Mucosa of descending colon (tissue), 3 donors: ENCODE measurements at regions of chr17 and their contacts with region 1.

Region 1: DNA sequence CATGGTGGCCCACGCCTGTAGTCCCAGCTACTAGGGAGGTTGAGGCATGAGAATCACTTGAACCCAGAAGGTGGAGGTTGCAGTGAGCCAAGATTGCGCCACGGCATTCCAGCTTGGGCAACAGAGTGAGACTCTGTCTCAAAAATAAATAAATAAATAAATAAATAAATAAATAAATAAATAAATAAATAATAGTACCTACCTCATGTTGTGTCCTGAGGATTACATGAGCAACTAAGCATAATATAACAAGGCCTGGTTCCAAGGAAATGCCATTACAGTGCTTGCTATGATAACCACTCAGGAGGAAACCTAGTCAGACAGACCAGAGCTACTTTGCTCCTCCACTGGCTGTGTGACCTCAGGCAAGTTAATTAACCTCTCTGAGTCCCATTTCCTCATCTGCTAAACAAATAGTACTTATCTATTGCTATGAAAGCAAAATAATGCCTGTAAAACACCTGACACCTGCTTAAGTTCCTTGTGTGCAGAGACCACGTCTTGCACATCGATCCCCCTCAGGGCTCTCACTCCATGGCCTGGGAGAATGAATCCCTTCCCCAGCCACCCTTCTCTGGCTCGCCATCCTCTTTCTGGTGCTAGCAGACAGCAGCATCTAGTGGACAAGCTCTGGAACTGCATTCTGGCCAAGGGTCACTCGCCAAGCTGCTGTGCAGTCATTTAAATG is 7.5 kb downstream of the EPOP start:
- DNase-seq: peak in 2 of 3 donors; percentile 63 to 71
- ATAC-seq: peak; percentile 87
- H3K4me3 ChIP-seq: no peak overlapping the region
- H3K4me1 ChIP-seq: no peaks in the 10 kb centered on the region
- CTCF ChIP-seq: peak; percentile 99

Region 2: GRCh38 chr17:38498186-38498752 is 169.0 kb before region 1 on chr17:
- intact Hi-C with region 1: loop called in 1 of 2 experiments (anchors 10 kb)
- DNase-seq: no peak
- ATAC-seq: no peak
- H3K4me3 ChIP-seq: no peak overlapping the region
- H3K4me1 ChIP-seq: no peaks in the 10 kb centered on the region
- CTCF ChIP-seq: no peak

Region 3: DNA sequence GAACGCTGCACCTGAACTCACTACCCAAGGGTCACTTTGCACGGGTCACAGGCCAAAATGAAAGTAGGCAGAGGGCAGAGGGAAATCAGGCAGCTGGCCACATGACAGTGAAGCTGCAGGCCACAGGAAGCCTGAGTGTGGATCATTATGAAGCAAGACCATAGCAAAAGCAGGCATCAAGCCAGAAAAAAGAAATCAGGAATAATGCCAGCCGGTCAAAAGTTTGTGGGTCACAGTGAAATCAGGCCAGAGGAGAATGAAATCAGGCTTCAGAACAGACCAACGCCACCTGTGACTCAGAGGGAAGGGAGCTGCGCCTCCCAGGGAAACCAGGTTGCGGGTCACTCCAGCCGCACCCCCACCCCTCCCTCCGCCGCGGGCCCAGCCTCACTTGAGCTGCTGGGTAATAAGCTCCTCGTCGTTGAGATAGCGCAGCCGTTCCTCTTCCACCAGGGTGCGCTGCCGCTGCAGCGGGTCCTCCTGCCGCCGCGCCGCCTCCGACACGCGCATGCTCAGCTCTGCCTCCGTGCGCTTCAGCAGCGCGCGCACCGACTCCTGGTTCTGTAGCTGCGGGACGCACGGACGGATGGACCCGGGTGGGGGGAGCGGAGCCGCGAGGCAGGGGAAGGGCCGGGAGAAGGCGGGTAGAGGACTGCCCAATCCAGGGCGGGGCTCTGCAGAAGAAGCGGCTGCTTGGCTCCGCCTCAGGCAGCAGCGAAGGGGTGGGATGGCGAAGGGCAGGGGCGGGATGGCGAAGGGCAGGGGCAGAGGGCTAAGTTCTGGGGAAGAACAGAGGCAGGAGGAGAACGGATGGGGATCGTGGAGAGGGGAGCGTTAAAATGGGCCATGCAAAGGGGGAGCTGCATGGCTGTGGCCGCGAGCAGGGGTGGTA is 109.2 kb before region 1 on chr17:
- intact Hi-C with region 1: loop called (anchors 5 to 10 kb)
- DNase-seq: peak; percentile 92 to 94 (median 93)
- ATAC-seq: peak; percentile 94
- H3K4me3 ChIP-seq: no peak overlapping the region
- H3K4me1 ChIP-seq: peaks cover 28% of the 10 kb centered on the region
- CTCF ChIP-seq: peak; percentile 90